Posterior vena cava (tissue), 2 donors: ENCODE measurements at regions of chr16 and their contacts with region 1.

Region 1: GRCh38 chr16:19375561-19376158 is 42.0 kb upstream of the TMC5 start:
- DNase-seq: no peak

Region 2: DNA sequence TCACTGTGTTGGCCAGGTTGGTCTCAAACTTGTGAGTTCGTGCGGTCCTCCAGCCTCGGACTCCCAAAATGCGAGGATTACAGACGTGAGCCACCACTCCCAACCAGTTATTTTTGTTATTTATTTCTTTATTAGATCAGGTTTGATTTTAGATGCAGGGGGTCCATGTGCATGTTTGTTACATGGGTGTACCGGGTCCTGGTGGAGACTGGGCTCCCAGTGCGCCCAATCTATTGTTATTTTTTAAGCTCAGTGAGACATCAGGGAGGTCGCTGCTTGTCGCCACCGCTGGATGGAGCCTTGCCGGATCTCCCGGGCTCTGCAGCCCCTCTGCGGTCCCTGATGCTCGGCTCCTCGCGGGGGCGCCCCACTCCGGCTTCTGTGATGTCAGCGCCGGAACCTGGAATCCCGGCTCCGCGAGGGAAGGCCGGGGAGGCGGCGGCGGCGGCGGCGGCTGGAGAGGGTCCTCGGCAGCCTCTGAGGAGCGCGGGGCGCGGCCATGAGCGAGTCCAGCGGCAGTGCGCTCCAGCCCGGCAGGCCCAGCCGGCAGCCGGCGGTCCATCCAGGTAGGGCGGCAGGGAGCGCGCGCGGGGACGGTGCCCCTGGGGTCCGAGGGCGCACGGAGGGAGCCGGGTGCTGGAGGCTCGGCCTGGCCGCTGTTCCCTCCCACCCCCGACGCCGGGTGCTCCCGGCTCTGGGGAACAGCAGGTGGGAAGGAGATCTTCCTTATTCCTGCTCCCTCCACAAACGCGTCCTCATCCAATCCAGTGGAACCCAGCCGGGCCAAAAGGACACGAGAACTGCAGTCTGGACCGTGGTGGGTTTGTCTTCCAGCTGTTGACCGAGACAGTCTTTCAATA is 391.9 kb before region 1 on chr16 and contains the start of gene TMC7:
- intact Hi-C with region 1: loop called in 1 of 2 experiments (anchors 10 kb)
- DNase-seq: peak; percentile 87
- total RNA-seq, gene TMC7: 1.2 to 1.6 TPM

Region 3: GRCh38 chr16:19086322-19087199 is 289.1 kb before region 1 on chr16:
- intact Hi-C with region 1: loop called (anchors 2 kb)
- DNase-seq: peak; percentile 96

Region 4: GRCh38 chr16:19167710-19168370 is 207.8 kb before region 1 on chr16 and contains the start of gene SYT17:
- intact Hi-C with region 1: loop called (anchors 5 to 10 kb)
- DNase-seq: peak; percentile 88
- total RNA-seq, gene SYT17: 1.2 to 2.8 TPM

Region 5: DNA sequence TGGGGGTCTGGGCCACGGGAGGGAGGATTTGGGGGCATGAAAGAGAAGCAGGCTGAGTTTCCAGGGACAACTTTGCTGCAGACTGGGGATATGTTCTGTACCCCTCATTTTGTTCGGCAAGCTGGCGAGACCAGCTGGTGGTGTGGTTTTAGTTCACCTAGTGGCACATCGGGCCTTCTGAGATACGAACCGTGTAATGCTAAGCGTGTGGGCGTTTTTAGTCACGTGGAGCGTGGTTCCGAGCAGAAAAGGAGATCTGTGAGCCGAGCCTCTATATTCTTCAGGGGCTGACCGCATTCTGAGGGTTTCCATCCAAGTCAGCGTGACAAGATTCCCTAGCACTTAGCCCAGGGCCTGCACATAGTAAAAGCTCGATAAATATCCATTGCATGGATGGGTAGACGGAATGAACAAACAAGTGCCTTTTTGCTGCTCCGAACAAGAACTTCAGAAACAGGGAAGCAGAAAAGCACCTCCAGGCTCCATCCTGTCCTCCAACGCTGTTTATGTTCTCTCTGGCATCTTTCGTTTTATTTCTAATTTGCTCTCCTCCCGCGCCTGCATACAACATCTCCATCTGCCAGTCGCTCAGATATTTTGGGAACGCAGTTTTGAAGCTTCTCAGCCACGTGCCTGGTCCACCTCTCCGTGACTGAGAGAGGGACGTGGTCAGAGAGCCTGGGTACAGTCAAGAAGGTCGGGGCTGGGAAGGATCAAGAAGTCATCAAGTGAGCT is 201.8 kb before region 1 on chr16:
- intact Hi-C with region 1: loop called (anchors 5 to 10 kb)
- DNase-seq: no peak

Region 6: GRCh38 chr16:19389246-19389645 is 13.6 kb after region 1 on chr16:
- intact Hi-C with region 1: no loop called
- DNase-seq: no peak

Region 7: GRCh38 chr16:20051147-20051546 is 675.5 kb after region 1 on chr16:
- intact Hi-C with region 1: no loop called
- DNase-seq: no peak